PC-9 (cell line): ENCODE measurements at regions of chr9 and their contacts with region 1.

Region 1: GRCh38 chr9:5714501-5715401 is 85.8 kb downstream of the RIC1 start:
- DNase-seq: peak; percentile 2 to 37
- H3K4me3 ChIP-seq: no peak overlapping the region
- H3K27ac ChIP-seq: no peak overlapping the region
- H3K4me1 ChIP-seq: no peaks in the 10 kb centered on the region
- H3K27me3 ChIP-seq: no peaks in the 10 kb centered on the region
- CTCF ChIP-seq: peak; percentile 58

Region 2: GRCh38 chr9:4894076-4894475 is 820.7 kb before region 1 on chr9:
- CTCF ChIA-PET with region 1: no interaction called
- POLR2A ChIA-PET with region 1: no interaction called
- intact Hi-C with region 1: no loop called
- DNase-seq: no peak
- H3K4me3 ChIP-seq: no peak overlapping the region
- H3K27ac ChIP-seq: no peak overlapping the region
- H3K4me1 ChIP-seq: no peaks in the 10 kb centered on the region
- H3K27me3 ChIP-seq: no peaks in the 10 kb centered on the region
- CTCF ChIP-seq: no peak

Region 3: GRCh38 chr9:5470122-5470521 is 244.6 kb before region 1 on chr9:
- CTCF ChIA-PET with region 1: no interaction called
- POLR2A ChIA-PET with region 1: no interaction called
- intact Hi-C with region 1: no loop called
- DNase-seq: no peak
- H3K4me3 ChIP-seq: no peak overlapping the region
- H3K27ac ChIP-seq: no peak overlapping the region
- H3K4me1 ChIP-seq: no peaks in the 10 kb centered on the region
- H3K27me3 ChIP-seq: no peaks in the 10 kb centered on the region
- CTCF ChIP-seq: no peak

Region 4: DNA sequence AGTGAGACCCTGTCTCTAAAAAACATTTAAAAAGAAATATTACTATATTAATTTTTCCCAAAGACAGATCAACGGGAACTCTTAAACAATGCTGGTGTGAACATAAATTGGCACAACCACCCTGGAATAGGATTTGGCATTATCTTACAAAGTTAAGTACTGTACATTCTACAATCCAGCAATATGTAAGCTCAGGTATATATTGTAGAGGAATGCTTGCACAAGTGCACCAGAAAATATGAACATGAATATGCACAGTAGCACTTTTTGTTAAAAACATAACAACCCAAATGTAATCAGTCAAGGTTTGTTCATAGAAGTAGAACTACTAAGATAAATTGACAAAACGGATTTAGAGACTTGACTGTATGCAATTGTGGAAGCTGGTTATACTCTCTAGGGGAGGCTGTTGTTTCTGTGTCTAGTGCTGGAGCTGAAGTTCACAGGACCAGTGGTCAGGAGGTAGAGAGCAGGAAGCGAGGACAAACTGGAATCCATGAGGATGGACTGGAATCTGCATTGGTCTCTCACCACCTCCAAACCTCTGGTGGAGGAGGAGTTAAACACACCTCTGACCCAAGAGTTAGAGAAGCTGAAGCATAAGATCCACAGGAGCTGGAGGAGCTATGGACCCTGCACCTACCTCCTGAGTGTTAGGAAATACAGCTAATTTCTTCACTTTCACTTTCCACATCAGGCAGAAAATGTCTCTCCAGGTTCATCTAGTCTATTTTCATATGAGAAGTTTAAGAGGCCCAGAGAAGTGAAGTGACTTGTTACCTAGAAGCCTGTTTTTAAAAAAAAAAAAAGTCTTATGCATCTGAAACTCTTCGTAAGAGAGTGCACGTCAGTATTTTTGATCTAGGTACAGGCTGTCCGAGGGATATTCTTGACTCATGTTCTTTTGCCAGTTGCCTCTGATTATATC is 106.2 kb before region 1 on chr9:
- CTCF ChIA-PET with region 1: no interaction called
- POLR2A ChIA-PET with region 1: no interaction called
- intact Hi-C with region 1: loop called (anchors 10 kb)
- DNase-seq: no peak
- H3K4me3 ChIP-seq: no peak overlapping the region
- H3K27ac ChIP-seq: no peak overlapping the region
- H3K4me1 ChIP-seq: no peaks in the 10 kb centered on the region
- H3K27me3 ChIP-seq: no peaks in the 10 kb centered on the region
- CTCF ChIP-seq: no peak